Calu3 (cell line): ENCODE measurements at regions of chr9 and their contacts with region 1.

Region 1: GRCh38 chr9:4420351-4420750 is 69.9 kb upstream of the SLC1A1 start:
- DNase-seq: no peak
- H3K4me3 Mint-ChIP-seq: no peak overlapping the region
- H3K27ac Mint-ChIP-seq: no peak overlapping the region
- H3K4me1 Mint-ChIP-seq: peaks cover 15% of the 10 kb centered on the region
- H3K27me3 Mint-ChIP-seq: no peaks in the 10 kb centered on the region
- CTCF ChIP-seq: no peak

Region 2: DNA sequence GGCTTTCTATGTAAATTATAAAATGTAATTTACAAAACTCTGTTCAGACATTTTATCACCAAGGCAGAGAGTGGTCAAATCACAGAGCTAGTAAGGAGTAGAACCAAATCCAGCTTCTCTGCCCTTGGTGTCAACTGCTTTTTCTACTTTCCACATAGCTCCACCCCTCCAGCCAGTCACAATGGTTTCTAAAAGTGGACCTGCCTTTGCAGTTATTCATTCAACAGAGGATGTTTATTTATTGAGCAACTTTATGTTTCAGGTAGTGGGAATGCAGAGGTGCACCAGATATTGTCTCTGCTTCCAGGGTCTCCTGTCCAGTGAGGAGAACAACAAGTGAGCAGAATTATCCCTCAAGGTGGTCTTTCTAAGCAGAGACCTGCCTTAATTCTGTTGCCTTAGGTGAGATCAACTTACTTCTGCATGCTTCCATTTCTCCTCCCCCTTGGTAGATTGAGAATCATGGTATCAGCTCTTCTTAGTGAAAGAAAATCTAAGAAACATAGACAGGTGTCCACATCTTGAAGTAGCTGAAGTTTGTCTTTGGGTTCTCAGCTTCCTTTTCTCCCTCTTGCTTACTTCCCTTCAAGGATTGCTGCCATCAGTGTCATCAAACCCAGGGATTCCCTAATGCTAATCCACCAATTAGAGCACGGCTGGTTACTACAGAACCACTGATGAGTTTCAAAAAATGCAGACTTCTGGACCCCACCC is 1072.8 kb after region 1 on chr9:
- CTCF ChIA-PET with region 1: interaction called, 11 read pairs
- intact Hi-C with region 1: no loop called
- DNase-seq: no peak
- H3K4me3 Mint-ChIP-seq: no peak overlapping the region
- H3K27ac Mint-ChIP-seq: no peak overlapping the region
- H3K4me1 Mint-ChIP-seq: peaks cover 9% of the 10 kb centered on the region
- H3K27me3 Mint-ChIP-seq: peaks cover 6% of the 10 kb centered on the region
- CTCF ChIP-seq: no peak